ENCODE measurements at regions of chr12 and their contacts with region 1.

Region 1: DNA sequence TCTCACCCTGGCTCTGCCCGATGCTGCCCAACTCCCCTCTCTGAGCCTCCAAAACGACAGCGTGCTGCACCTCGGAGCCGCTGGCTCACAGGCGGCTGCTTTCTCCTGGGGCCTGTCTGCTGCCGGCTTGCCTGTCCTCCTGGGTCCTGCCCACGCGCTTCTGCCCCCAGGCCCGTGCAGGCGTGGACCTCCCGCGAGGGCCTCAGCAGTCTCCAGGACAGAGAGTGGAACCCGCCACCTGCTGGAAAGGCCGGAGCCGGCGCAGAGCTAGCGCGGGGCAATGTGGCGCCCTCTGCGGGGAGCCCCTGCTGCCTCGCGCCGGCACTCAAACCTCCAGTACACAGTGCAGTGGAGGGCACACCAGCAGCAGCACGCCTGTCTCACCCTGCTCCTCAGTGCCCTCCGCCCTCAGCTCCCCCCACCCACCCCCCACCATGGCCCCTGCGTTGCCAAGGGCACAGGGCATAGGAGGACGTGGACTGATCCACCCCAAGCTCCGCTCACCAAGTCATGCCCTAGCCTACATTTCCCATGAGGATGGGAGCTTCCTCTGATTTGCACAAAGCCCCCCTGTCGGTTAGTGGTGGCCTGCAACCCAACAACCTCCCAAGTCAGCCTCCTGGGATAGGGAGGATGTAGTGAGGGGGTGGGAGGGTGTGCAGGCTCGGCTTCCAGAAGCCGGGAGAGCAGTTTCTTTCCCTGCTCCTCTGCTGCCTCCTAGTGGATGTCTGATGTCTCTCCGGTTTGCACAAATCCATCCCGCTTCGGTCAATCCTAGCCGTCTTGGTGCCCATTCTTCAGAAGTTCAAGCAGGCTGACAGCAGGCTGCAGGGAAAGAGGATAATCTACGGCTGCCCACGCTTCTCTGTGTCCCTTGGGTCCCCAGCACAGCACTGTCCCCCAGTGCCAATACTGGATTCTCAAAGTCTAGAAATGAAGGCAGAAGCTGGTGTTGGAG is 25.2 kb downstream of the KRT8 start:
- DNase-seq: peak; percentile 82
- ATAC-seq: peak; percentile 95
- H3K4me3 Mint-ChIP-seq: peak overlapping the region; percentile 54
- H3K27ac Mint-ChIP-seq: no peak overlapping the region
- H3K4me1 Mint-ChIP-seq: peaks cover 5% of the 10 kb centered on the region
- H3K27me3 Mint-ChIP-seq: peaks cover 6% of the 10 kb centered on the region
- CTCF ChIP-seq: peak; percentile 92

Region 2: DNA sequence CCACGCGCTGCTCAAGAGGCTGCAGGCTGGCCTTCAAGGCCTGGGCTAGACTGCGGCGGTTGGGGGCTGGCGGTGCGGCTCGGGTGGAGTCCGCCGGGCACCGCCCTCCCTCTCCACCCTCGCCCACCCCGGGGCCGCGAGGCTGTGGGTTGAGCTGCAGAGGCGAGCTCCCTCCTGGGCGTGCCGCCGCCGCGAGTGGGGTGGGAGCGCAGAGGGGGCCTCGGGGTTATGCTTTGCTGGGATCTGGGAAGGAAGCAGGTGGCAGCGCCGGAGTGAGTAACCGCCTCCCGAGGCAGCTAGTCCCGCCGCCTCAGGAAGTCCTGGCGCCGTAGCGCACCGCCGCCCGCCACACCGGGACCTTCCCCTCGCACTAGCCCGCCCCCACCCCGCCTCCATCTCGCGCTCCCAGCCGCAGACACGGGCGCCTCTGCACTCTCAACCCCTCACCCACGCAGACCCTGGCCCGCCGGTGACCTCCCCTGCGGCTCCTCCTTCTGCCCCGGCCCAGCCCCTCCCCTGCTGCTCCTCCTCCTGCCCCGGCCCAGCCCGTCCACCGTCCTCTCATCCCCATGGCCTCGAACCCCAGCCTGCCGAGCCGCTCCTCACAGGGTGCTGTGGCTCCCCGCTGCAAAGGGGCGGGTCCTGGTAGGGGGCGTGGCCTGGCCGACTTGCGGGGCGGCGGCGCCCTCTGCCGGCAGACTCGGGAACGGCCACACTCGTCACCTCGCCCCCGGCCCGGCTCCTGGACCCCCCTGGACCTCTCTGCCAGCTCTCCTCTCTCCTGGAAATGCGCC is 856.3 kb before region 1 on chr12:
- CTCF ChIA-PET with region 1: no interaction called
- POLR2A ChIA-PET with region 1: no interaction called
- intact Hi-C with region 1: no loop called
- DNase-seq: peak; percentile 96
- ATAC-seq: peak; percentile 69
- H3K4me3 Mint-ChIP-seq: peak overlapping the region; percentile 76
- H3K27ac Mint-ChIP-seq: peak overlapping the region; percentile 96
- H3K4me1 Mint-ChIP-seq: peaks cover 41% of the 10 kb centered on the region
- H3K27me3 Mint-ChIP-seq: peaks cover 1% of the 10 kb centered on the region
- CTCF ChIP-seq: peak; percentile 96

Region 3: GRCh38 chr12:52156736-52157565 is 722.7 kb before region 1 on chr12:
- CTCF ChIA-PET with region 1: interaction called, 5 read pairs
- POLR2A ChIA-PET with region 1: no interaction called
- intact Hi-C with region 1: loop called (anchors 10 kb)
- DNase-seq: peak; percentile 81
- ATAC-seq: peak; percentile 64
- H3K4me3 Mint-ChIP-seq: no peak overlapping the region
- H3K27ac Mint-ChIP-seq: no peak overlapping the region
- H3K4me1 Mint-ChIP-seq: peaks cover 17% of the 10 kb centered on the region
- H3K27me3 Mint-ChIP-seq: no peaks in the 10 kb centered on the region
- CTCF ChIP-seq: peak; percentile 97

Region 4: DNA sequence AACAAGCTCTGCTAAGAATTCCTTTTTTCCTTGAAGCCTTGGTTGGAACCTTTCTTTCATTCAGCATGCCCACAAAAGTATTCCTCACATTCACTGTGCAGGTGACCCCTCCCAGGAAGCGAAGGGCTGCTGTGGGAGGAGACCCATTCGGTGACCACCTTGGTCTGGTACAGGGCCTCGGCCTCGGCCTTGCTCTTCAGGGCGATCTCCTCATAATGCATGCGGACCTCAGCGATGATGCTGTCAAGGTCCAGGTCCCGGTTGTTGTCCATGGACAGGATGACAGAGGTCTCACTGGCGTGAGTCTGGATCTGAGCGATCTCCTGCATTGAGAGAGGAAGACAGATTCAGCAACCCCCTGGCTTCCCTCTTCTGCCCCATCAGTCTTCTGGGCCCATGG is 309.2 kb before region 1 on chr12:
- CTCF ChIA-PET with region 1: interaction called, 325 read pairs
- POLR2A ChIA-PET with region 1: no interaction called
- intact Hi-C with region 1: no loop called
- DNase-seq: no peak
- ATAC-seq: no peak
- H3K4me3 Mint-ChIP-seq: no peak overlapping the region
- H3K27ac Mint-ChIP-seq: no peak overlapping the region
- H3K4me1 Mint-ChIP-seq: peaks cover 3% of the 10 kb centered on the region
- H3K27me3 Mint-ChIP-seq: peaks cover 10% of the 10 kb centered on the region
- CTCF ChIP-seq: no peak

Region 5: DNA sequence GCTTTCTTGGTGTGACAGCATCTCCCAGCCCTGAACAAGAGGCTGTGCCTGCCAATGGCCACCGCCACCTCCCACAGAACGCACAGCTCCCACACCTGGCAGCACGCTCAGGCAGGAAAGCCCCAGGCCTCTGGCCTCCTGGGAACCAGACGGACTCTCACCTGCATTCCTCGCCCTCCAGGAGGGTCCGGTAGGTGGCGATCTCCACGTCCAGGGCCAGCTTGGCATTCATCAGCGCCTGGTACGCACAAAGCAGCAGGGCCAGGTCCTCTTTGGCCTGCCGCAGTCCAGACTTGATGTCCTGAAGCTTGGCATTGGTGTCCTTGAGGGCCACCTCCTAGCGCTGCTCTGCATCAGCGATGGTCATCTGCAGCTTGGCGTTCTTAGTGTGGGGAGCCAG is 164.3 kb before region 1 on chr12:
- CTCF ChIA-PET with region 1: interaction called, 18 read pairs
- POLR2A ChIA-PET with region 1: no interaction called
- intact Hi-C with region 1: no loop called
- DNase-seq: peak; percentile 4
- ATAC-seq: no peak
- H3K4me3 Mint-ChIP-seq: no peak overlapping the region
- H3K27ac Mint-ChIP-seq: no peak overlapping the region
- H3K4me1 Mint-ChIP-seq: peaks cover 7% of the 10 kb centered on the region
- H3K27me3 Mint-ChIP-seq: peaks cover 26% of the 10 kb centered on the region
- CTCF ChIP-seq: no peak

Region 6: DNA sequence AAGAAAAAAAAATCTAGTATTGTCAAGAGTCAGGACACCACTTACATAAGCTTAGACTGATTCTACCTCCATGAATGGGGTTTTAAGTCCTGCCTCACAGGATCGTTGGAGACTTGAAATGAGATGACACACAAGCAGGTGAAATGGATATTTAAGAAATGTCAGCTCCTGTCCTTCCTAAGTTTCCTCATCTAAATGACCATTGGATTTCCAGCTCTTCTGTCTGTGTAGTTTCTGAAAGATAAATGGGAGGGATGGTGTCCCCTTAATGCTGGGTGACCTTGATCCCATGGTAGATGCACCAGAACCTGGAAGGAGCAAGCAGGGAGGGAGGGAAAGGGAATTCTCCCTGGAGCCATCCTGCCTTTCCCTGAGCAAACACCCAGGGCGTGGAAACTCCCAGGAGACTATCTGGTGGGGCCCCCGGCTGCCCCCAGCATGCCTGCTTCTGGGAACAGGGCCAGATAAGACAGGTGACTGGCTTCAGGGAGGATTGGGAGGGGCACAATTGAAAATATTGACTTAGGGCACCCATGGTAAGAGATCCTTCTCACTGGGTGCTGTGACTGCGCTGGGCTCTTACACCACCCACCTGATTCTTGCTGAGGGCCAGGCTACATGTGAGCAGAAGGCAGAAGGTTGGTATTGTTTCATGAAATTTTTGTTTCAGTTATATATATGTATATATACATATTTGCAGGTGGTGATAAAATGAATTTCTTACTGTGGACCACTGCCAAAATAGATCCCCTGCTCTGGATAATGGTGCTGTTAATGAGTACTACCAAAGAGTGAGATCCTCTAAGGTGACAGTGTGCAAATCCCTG is 15.6 kb after region 1 on chr12:
- CTCF ChIA-PET with region 1: interaction called, 50 read pairs
- POLR2A ChIA-PET with region 1: interaction called, 3 read pairs
- intact Hi-C with region 1: no loop called
- DNase-seq: no peak
- ATAC-seq: no peak
- H3K4me3 Mint-ChIP-seq: no peak overlapping the region
- H3K27ac Mint-ChIP-seq: no peak overlapping the region
- H3K4me1 Mint-ChIP-seq: no peaks in the 10 kb centered on the region
- H3K27me3 Mint-ChIP-seq: peaks cover 4% of the 10 kb centered on the region
- CTCF ChIP-seq: no peak

Region 7: GRCh38 chr12:52969828-52970569 is 90.3 kb after region 1 on chr12:
- CTCF ChIA-PET with region 1: interaction called, 28 read pairs
- POLR2A ChIA-PET with region 1: no interaction called
- intact Hi-C with region 1: no loop called
- DNase-seq: no peak
- ATAC-seq: no peak
- H3K4me3 Mint-ChIP-seq: no peak overlapping the region
- H3K27ac Mint-ChIP-seq: no peak overlapping the region
- H3K4me1 Mint-ChIP-seq: no peaks in the 10 kb centered on the region
- H3K27me3 Mint-ChIP-seq: peaks cover 5% of the 10 kb centered on the region
- CTCF ChIP-seq: no peak

Measured in activated CD8-positive, alpha-beta T cell treated with anti-CD3 and anti-CD28 coated beads for 36 hours (primary cell).